ENCODE measurements at regions of chr3 and their contacts with region 1.

Region 1: GRCh38 chr3:56702490-56703315 is 19.6 kb upstream of the TASOR start:
- DNase-seq: peak; percentile 60
- ATAC-seq: peak; percentile 64
- H3K4me3 Mint-ChIP-seq: no peak overlapping the region
- H3K27ac Mint-ChIP-seq: no peak overlapping the region
- H3K4me1 Mint-ChIP-seq: peaks cover 21% of the 10 kb centered on the region
- H3K27me3 Mint-ChIP-seq: no peaks in the 10 kb centered on the region

Region 2: DNA sequence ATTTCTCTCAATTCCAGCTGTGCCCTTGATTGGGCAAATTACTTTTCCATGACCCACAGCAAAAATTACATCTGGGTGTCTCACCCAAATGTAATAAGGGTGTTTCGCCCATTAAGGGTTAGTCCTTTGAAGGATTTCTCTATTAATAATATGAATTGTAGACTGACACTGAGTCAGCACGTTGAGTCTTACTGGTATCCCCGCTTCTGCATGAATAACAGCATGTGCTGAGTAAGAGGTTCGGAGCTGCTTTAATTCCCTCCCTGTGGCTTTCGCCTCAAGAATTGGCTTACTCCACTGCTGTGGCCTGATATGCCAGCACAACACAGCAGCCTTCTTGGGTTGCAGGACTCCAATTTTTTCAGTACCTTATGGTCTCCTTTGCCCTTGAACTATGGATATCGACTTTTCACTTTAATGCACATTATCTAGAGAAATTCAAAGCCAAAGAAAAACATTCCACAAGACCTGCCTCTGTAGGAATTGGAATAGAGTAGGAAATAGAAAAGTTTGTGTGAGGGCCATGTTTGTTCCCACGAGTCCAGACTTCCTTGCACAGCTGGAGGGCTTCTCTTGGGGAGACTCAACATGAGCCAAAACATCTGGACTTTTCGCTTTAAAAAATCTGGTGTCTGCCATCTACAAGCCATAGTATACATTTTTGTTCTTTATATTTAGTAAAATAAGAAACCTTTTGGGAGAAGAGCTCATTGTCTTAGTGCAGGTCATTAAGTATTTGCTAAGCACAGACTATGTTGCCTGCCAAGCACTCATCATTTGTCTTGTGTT is 213.7 kb before region 1 on chr3:
- CTCF ChIA-PET with region 1: no interaction called
- POLR2A ChIA-PET with region 1: no interaction called
- intact Hi-C with region 1: no loop called
- DNase-seq: no peak
- ATAC-seq: no peak
- H3K4me3 Mint-ChIP-seq: no peak overlapping the region
- H3K27ac Mint-ChIP-seq: no peak overlapping the region
- H3K4me1 Mint-ChIP-seq: no peaks in the 10 kb centered on the region
- H3K27me3 Mint-ChIP-seq: peaks cover 13% of the 10 kb centered on the region

Region 3: GRCh38 chr3:56812754-56813650 is 110.3 kb after region 1 on chr3:
- CTCF ChIA-PET with region 1: interaction called, 18 read pairs
- POLR2A ChIA-PET with region 1: interaction called, 3 read pairs
- intact Hi-C with region 1: no loop called
- DNase-seq: no peak
- ATAC-seq: no peak
- H3K4me3 Mint-ChIP-seq: peak overlapping the region; percentile 3
- H3K27ac Mint-ChIP-seq: peak overlapping the region; percentile 17
- H3K4me1 Mint-ChIP-seq: peaks cover 60% of the 10 kb centered on the region
- H3K27me3 Mint-ChIP-seq: no peaks in the 10 kb centered on the region

Region 4: DNA sequence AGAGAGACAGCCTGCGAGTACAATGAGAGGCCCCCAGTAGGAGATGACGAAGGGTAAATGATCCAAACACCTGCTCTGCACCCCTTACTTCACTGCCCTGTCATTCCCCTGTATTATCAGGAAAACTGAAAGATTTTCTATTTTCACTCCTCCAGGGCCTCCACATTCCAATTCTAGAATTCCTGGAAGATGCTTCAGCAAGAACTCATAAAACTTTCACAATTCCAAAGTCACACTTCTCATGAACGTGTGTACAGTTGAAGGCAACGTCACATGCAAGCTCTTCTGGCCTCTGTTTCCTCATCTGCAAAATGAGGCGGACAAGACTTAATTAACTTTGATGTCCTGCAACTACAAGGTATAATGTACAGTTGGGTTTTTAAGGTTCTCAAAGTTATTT is 295.0 kb after region 1 on chr3:
- CTCF ChIA-PET with region 1: interaction called, 22 read pairs
- POLR2A ChIA-PET with region 1: no interaction called
- intact Hi-C with region 1: no loop called
- DNase-seq: no peak
- ATAC-seq: no peak
- H3K4me3 Mint-ChIP-seq: no peak overlapping the region
- H3K27ac Mint-ChIP-seq: no peak overlapping the region
- H3K4me1 Mint-ChIP-seq: peaks cover 3% of the 10 kb centered on the region
- H3K27me3 Mint-ChIP-seq: no peaks in the 10 kb centered on the region

Measured in activated CD4-positive, alpha-beta T cell treated with anti-CD3 and anti-CD28 coated beads for 36 hours (primary cell).